ENCODE measurements at regions of chr3 and their contacts with region 1.

Region 1: GRCh38 chr3:159634483-159634882 is 354.2 kb upstream of the IL12A start:
- DNase-seq: no peak
- H3K4me3 ChIP-seq: no peak overlapping the region
- H3K27ac ChIP-seq: no peak overlapping the region
- H3K4me1 ChIP-seq: peaks cover 63% of the 10 kb centered on the region
- H3K27me3 ChIP-seq: no peaks in the 10 kb centered on the region
- CTCF ChIP-seq: no peak

Region 2: DNA sequence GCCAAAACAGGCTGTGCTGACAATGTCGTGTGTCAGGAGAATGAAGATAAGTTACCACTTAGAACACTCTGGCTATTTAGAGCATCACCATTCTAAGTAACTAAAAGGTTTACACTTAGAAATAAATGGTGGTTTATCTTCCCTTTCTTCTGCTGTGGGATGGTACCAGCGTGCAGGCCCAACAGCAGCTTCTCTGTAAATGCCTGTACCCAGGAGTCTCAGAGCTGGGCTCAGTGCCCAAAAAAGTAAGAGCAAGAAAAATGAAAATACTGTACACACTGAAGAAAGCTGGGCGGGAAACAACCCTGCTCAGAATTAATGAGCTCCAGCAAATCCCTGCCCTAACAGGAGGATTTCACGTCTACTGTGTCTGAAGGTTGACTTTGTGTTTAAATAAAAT is 626.1 kb before region 1 on chr3:
- CTCF ChIA-PET with region 1: no interaction called
- POLR2A ChIA-PET with region 1: no interaction called
- intact Hi-C with region 1: no loop called
- DNase-seq: no peak
- H3K4me3 ChIP-seq: no peak overlapping the region
- H3K27ac ChIP-seq: no peak overlapping the region
- H3K4me1 ChIP-seq: no peaks in the 10 kb centered on the region
- H3K27me3 ChIP-seq: no peaks in the 10 kb centered on the region
- CTCF ChIP-seq: no peak

Region 3: GRCh38 chr3:159458010-159458409 is 176.5 kb before region 1 on chr3:
- CTCF ChIA-PET with region 1: no interaction called
- POLR2A ChIA-PET with region 1: interaction called, 10 read pairs
- intact Hi-C with region 1: no loop called
- DNase-seq: peak; percentile 92 to 96
- H3K4me3 ChIP-seq: no peak overlapping the region
- H3K27ac ChIP-seq: peak overlapping the region; percentile 63
- H3K4me1 ChIP-seq: peaks cover 25% of the 10 kb centered on the region
- H3K27me3 ChIP-seq: no peaks in the 10 kb centered on the region
- CTCF ChIP-seq: no peak

Region 4: DNA sequence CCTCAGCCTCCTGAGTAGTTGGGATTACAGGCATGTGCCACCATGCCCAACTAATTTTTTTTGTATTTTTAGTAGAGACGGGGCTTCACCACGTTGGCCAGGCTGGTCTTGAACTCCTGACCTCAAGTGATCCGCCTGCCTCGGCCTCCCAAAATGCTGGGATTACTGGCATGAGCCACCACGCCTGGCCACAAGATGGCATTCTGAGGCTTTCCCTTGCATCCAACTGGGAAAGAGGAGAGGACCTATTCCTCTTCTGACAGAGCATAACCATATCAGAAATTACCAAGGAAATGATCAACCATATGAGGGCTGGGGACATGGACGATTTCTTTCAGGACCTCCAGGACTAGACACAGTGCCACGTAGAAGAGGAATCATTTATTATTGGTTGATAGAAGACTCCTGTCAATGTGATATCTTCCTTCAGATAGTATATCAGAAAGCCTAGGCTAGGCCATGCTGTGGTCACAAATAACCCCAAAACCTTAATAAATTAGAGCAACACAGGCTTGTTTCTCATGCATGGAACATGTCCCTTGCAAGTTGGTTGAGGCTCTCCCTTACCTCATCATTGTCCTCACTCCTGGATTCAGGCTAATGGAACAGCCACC is 18.2 kb before region 1 on chr3:
- CTCF ChIA-PET with region 1: interaction called, 10 read pairs
- POLR2A ChIA-PET with region 1: no interaction called
- intact Hi-C with region 1: no loop called
- DNase-seq: peak; percentile 43 to 69
- H3K4me3 ChIP-seq: no peak overlapping the region
- H3K27ac ChIP-seq: no peak overlapping the region
- H3K4me1 ChIP-seq: peaks cover 16% of the 10 kb centered on the region
- H3K27me3 ChIP-seq: no peaks in the 10 kb centered on the region
- CTCF ChIP-seq: peak; percentile 80

Region 5: GRCh38 chr3:159664009-159664408 is 29.5 kb after region 1 on chr3:
- CTCF ChIA-PET with region 1: no interaction called
- POLR2A ChIA-PET with region 1: no interaction called
- intact Hi-C with region 1: loop called (anchors 2 kb)
- DNase-seq: no peak
- H3K4me3 ChIP-seq: no peak overlapping the region
- H3K27ac ChIP-seq: no peak overlapping the region
- H3K4me1 ChIP-seq: no peaks in the 10 kb centered on the region
- H3K27me3 ChIP-seq: no peaks in the 10 kb centered on the region
- CTCF ChIP-seq: no peak

Region 6: GRCh38 chr3:159732172-159733111 is 98.0 kb after region 1 on chr3:
- CTCF ChIA-PET with region 1: no interaction called
- POLR2A ChIA-PET with region 1: no interaction called
- intact Hi-C with region 1: loop called (anchors 2 kb)
- DNase-seq: peak; percentile 69 to 73
- H3K4me3 ChIP-seq: peak overlapping the region; percentile 38; the same call in 1 of the 2 replicates
- H3K27ac ChIP-seq: no peak overlapping the region
- H3K4me1 ChIP-seq: peaks cover 23% of the 10 kb centered on the region
- H3K27me3 ChIP-seq: no peaks in the 10 kb centered on the region
- CTCF ChIP-seq: no peak

Region 7: GRCh38 chr3:159892171-159892795 is 257.8 kb after region 1 on chr3:
- CTCF ChIA-PET with region 1: no interaction called
- POLR2A ChIA-PET with region 1: no interaction called
- intact Hi-C with region 1: no loop called
- DNase-seq: peak in 1 of 2 experiments; percentile 11
- H3K4me3 ChIP-seq: no peak overlapping the region
- H3K27ac ChIP-seq: no peak overlapping the region
- H3K4me1 ChIP-seq: no peaks in the 10 kb centered on the region
- H3K27me3 ChIP-seq: no peaks in the 10 kb centered on the region
- CTCF ChIP-seq: no peak

Region 8: DNA sequence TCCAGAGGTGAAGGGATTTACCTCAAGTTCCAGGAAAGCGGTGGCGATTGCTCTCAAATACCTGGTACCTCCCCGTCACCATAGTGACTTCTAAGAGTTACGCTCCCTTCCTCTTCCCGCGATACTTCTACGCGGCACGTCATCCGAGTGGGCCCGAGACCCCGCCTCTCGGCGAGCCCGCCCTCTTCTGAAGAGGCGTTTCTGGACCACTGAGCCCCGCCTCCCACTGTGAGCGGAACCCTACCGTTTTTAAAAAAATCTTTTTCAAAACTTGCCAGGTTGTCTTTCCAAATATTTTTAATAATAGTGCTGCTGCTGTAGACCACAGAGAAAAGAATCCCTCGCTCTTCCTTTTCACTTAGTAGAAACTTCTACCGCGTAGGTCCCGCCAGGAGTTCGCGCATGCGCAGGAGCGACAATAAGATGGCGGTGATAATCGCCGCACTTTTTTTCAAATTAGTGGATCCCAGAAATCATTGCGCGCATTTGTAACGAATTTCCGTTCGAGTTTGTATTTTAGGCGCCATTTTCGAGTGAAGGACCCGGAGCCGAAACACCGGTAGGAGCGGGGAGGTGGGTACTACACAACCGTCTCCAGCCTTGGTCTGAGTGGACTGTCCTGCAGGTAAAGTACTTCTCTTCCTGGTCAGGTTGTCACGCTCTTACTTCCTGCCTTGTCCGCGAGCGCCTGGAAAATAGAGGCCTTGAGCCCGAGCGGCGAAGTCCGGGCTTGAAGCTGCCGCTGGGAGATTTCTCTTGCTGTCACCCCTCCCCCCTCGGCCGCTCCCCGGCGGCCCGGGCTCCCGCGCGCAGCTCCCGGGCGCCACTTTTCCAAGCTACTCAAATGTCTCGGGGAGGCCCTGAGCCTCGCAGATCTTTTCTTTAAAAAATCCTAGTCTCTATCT is 764.9 kb after region 1 on chr3 and contains the starts of genes IFT80 and SMC4:
- CTCF ChIA-PET with region 1: no interaction called
- POLR2A ChIA-PET with region 1: no interaction called
- intact Hi-C with region 1: loop called (anchors 10 kb)
- DNase-seq: peak; percentile 91 to 98
- H3K4me3 ChIP-seq: peak within 1 kb of the TSS; percentile 90
- H3K27ac ChIP-seq: peak within 1 kb of the TSS; percentile 67
- H3K4me1 ChIP-seq: peaks cover 32% of the 10 kb centered on the region
- H3K27me3 ChIP-seq: no peaks in the 10 kb centered on the region
- CTCF ChIP-seq: no peak
- total RNA-seq, gene IFT80: 47.9 and 59.4 TPM in 2 replicates
- total RNA-seq, gene SMC4: 138 and 181 TPM in 2 replicates

Measured in PC-9 (cell line).